Activated CD8-positive, alpha-beta memory T cell treated with anti-CD3 and anti-CD28 coated beads, Interleukin-2, amount 10 ng/mL, durations not matched to agents 7 days and 5 days (primary cell): ENCODE measurements at regions of chr6 and their contacts with region 1.

Region 1: GRCh38 chr6:133923938-133924593 is 29.0 kb upstream of the TBPL1 start:
- DNase-seq: peak; percentile 66
- ATAC-seq: peak; percentile 85
- H3K4me3 Mint-ChIP-seq: no peak overlapping the region
- H3K27ac Mint-ChIP-seq: no peak overlapping the region
- H3K4me1 Mint-ChIP-seq: peaks cover 2% of the 10 kb centered on the region
- H3K27me3 Mint-ChIP-seq: peaks cover 45% of the 10 kb centered on the region

Region 2: GRCh38 chr6:133865680-133866079 is 58.4 kb before region 1 on chr6:
- CTCF ChIA-PET with region 1: no interaction called
- DNase-seq: no peak
- ATAC-seq: no peak
- H3K4me3 Mint-ChIP-seq: no peak overlapping the region
- H3K27ac Mint-ChIP-seq: no peak overlapping the region
- H3K4me1 Mint-ChIP-seq: no peaks in the 10 kb centered on the region
- H3K27me3 Mint-ChIP-seq: peaks cover 5% of the 10 kb centered on the region

Region 3: DNA sequence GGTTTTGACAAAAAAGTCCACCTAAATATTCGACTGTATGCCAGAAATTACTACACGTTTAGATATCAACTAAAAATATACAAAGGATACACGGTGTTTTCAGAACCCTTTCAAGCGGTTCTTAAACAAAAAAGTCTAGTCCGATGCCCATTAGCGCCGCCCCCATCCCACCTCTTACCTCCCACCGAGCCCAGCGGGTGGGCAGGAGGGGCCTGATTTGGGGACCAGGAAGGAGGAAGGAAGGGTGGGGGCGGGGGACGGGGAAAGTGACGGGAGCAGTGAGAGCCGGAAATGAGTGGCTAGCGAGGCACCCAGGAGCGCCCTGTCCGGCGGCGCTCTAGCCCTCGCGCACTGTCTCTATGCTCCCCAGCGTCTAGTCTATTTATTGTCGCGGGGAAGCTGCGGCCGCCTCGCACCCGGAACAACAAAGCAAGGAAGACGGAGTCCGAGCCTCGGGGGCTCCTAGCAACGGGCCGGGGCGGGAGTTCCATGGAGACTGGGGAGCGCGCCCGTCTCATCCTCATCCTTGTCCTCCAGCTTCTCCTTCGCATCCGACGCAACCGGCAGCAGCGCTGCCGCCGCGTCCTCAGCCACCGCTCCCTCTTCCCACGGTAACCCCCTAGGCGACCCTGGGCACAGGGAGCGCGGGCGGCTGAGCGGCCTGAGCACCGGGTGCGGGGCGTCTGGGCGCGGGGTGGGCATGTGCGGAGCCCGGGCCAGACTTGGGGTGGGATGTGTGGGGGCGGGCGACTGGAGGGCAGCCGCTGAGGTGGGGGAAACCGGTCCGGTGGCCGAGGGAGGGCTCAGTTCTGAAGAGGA is 29.0 kb after region 1 on chr6 and contains the start of gene TBPL1:
- CTCF ChIA-PET with region 1: interaction called, 18 read pairs
- DNase-seq: peak; percentile 94
- ATAC-seq: peak; percentile 89
- H3K4me3 Mint-ChIP-seq: peak within 1 kb of the TSS; percentile 97
- H3K27ac Mint-ChIP-seq: peak within 1 kb of the TSS; percentile 88
- H3K4me1 Mint-ChIP-seq: peaks cover 38% of the 10 kb centered on the region
- H3K27me3 Mint-ChIP-seq: peaks cover 2% of the 10 kb centered on the region
- total RNA-seq, gene TBPL1: 30.7 to 33.9 TPM

Region 4: GRCh38 chr6:133973109-133973971 is 49.3 kb after region 1 on chr6:
- CTCF ChIA-PET with region 1: interaction called, 37 read pairs
- DNase-seq: no peak
- ATAC-seq: peak; percentile 40
- H3K4me3 Mint-ChIP-seq: no peak overlapping the region
- H3K27ac Mint-ChIP-seq: no peak overlapping the region
- H3K4me1 Mint-ChIP-seq: peaks cover 18% of the 10 kb centered on the region
- H3K27me3 Mint-ChIP-seq: no peaks in the 10 kb centered on the region

Region 5: GRCh38 chr6:134090591-134090990 is 166.5 kb after region 1 on chr6:
- CTCF ChIA-PET with region 1: interaction called, 205 read pairs
- DNase-seq: no peak
- ATAC-seq: no peak
- H3K4me3 Mint-ChIP-seq: no peak overlapping the region
- H3K27ac Mint-ChIP-seq: no peak overlapping the region
- H3K4me1 Mint-ChIP-seq: peaks cover 8% of the 10 kb centered on the region
- H3K27me3 Mint-ChIP-seq: peaks cover 33% of the 10 kb centered on the region

Region 6: DNA sequence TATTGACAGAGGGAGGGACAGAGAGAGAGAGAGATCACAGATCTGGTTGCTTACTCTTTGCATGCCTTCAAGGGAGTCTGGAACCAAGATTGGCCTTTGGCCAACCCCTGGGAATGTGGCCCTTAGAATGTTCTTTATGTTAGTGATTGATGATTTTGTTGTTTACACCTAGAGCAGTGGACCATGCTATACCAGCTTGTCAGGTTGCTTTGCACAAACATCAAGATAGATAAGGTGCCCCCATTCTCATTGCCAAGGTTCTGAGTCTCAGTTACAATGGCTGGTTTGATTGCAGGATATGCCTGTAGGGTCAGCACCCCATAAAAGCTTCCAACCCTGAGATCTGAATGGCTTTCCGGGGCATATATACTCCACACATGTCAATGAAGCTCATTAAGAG is 181.9 kb after region 1 on chr6:
- CTCF ChIA-PET with region 1: interaction called, 17 read pairs
- DNase-seq: no peak
- ATAC-seq: no peak
- H3K4me3 Mint-ChIP-seq: no peak overlapping the region
- H3K27ac Mint-ChIP-seq: no peak overlapping the region
- H3K4me1 Mint-ChIP-seq: no peaks in the 10 kb centered on the region
- H3K27me3 Mint-ChIP-seq: peaks cover 43% of the 10 kb centered on the region